ENCODE measurements at regions of chr4 and their contacts with region 1.

Region 1: GRCh38 chr4:140153718-140154571 is at the start of gene MAML3:
- DNase-seq: peak; percentile 82
- H3K4me3 Mint-ChIP-seq: peak within 1 kb of the TSS; percentile 91
- H3K27ac Mint-ChIP-seq: peak within 1 kb of the TSS; percentile 33
- H3K4me1 Mint-ChIP-seq: peaks cover 39% of the 10 kb centered on the region
- H3K27me3 Mint-ChIP-seq: peaks cover 16% of the 10 kb centered on the region
- total RNA-seq, gene MAML3: 3.0 and 3.3 TPM in 2 replicates

Region 2: DNA sequence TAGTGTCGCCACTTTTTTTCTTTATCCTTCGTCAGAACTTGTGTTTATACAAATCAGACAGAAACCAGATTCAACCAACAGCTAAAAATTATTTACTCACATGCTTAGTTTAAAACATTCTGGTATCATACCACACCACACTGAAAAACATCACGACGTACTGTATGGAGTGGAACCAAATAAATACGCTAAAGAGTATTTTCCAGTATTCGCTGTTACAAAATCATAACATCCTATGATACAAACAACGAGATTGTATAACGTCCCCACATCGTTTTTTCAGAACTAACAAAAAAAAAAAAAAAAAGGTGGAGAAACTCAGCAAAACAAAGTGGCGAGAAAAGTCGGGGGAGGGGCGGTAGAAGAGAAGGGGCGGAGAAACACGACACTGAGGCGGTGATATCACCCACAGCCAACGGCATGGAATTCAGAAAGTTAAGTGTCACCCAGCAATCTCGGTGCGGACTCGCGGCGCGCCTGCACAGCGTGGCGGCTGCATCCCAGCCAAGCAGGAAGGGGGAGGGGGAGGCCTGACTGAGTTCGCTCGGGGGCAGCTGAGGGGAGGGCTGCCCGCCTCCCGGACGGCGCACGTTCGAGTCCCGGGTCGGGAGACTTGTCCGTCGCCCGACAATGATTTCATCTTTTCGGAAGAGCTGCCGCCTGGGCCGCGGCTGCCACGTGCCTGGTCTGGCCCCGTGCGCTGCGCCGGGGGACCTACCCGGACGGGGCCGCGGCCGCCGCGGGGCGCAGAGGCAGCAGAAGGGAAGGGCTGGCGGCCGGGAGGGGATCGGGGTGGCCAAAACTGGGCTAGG is 598.8 kb before region 1 on chr4:
- intact Hi-C with region 1: loop called (anchors 5 kb)
- DNase-seq: peak; percentile 82
- H3K4me3 Mint-ChIP-seq: peak overlapping the region; percentile 97
- H3K27ac Mint-ChIP-seq: peak overlapping the region; percentile 98
- H3K4me1 Mint-ChIP-seq: peaks cover 47% of the 10 kb centered on the region
- H3K27me3 Mint-ChIP-seq: peaks cover 4% of the 10 kb centered on the region

Region 3: DNA sequence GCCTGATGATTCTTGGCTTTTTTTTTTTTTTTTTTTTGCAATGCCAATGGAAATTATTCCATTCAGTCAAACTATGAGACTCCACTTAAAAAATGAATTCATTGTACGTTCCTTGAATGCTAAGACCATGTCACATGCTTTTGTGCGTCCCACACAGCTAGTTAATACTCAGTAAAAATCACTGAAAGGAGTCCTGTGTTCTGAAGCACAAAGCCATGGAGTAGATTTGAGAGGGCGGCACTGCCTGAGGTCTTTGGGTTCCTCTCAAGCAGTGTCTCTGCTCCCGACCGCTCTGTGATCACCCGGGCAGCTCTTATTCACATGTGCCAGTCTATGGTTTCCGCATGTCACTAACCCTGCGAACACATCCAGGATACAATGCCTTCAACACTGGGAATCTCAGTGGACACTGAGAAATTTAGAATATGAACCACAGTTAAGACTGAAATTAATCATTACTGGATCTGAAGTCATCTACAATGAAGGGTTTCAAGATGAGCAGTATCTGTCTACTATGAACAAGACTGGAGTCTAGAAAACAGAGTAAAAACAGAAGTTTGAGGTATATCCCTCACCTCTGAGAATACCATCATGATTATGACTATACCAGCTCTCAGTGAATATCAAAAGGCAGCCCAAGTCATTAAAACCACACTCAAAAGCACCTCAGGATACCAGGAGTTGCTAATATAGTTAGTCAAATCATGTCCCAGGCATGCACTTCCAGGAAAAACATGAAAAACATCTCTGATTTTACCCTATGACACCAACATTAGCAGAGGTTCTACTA is 295.3 kb before region 1 on chr4:
- intact Hi-C with region 1: loop called (anchors 2 kb)
- DNase-seq: no peak
- H3K4me3 Mint-ChIP-seq: no peak overlapping the region
- H3K27ac Mint-ChIP-seq: peak overlapping the region; percentile 61
- H3K4me1 Mint-ChIP-seq: peaks cover 41% of the 10 kb centered on the region
- H3K27me3 Mint-ChIP-seq: peaks cover 26% of the 10 kb centered on the region

Region 4: GRCh38 chr4:140049024-140049848 is 104.7 kb before region 1 on chr4:
- intact Hi-C with region 1: loop called (anchors 1 kb)
- DNase-seq: peak; percentile 52
- H3K4me3 Mint-ChIP-seq: peak overlapping the region; percentile 74
- H3K27ac Mint-ChIP-seq: peak overlapping the region; percentile 78
- H3K4me1 Mint-ChIP-seq: peaks cover 55% of the 10 kb centered on the region
- H3K27me3 Mint-ChIP-seq: peaks cover 36% of the 10 kb centered on the region

Region 5: GRCh38 chr4:140103676-140104075 is 50.3 kb before region 1 on chr4:
- intact Hi-C with region 1: loop called (anchors 1 kb)
- DNase-seq: peak; percentile 42
- H3K4me3 Mint-ChIP-seq: no peak overlapping the region
- H3K27ac Mint-ChIP-seq: peak overlapping the region; percentile 54
- H3K4me1 Mint-ChIP-seq: peaks cover 66% of the 10 kb centered on the region
- H3K27me3 Mint-ChIP-seq: peaks cover 3% of the 10 kb centered on the region

Region 6: GRCh38 chr4:140233791-140234696 is 80.1 kb after region 1 on chr4:
- intact Hi-C with region 1: loop called (anchors 1 kb)
- DNase-seq: no peak
- H3K4me3 Mint-ChIP-seq: peak overlapping the region; percentile 42
- H3K27ac Mint-ChIP-seq: peak overlapping the region; percentile 97
- H3K4me1 Mint-ChIP-seq: peaks cover 35% of the 10 kb centered on the region
- H3K27me3 Mint-ChIP-seq: no peaks in the 10 kb centered on the region

Measured in activated T-helper 2 cell treated with anti-CD3 and anti-CD28 coated beads, Interferon-gamma antibody, Interleukin-2, Interleukin-4, amounts not matched to agents 10 μg/mL and 5 μg/mL and 100 μg/mL, durations not matched to agents 14 hours and 24 hours and 36 hours (primary cell).